Right lobe of liver (tissue), 6 donors: ENCODE measurements at regions of chr4 and their contacts with region 1.

Region 1: GRCh38 chr4:184983672-184984356 is 34.5 kb upstream of the HELT start:
- DNase-seq: peak; percentile 81 to 83 (median 82)
- ATAC-seq: peak; percentile 97 to 98 (median 98)
- H3K4me3 ChIP-seq: no peak overlapping the region
- H3K27ac ChIP-seq: no peak overlapping the region
- H3K4me1 ChIP-seq: peaks cover 0 to 5% (median 0%) of the 10 kb centered on the region in 4 donors
- H3K27me3 ChIP-seq: no peaks in the 10 kb centered on the region
- CTCF ChIP-seq: peak; percentile 46 to 63 (median 56)
- POLR2A ChIP-seq: no peak

Region 2: GRCh38 chr4:184755278-184755677 is 228.5 kb before region 1 on chr4:
- intact Hi-C with region 1: loop called in 1 of 2 experiments (anchors 10 kb)
- DNase-seq: no peak
- ATAC-seq: no peak
- H3K4me3 ChIP-seq: no peak overlapping the region
- H3K27ac ChIP-seq: no peak overlapping the region
- H3K4me1 ChIP-seq: peaks cover 0 to 17% (median 0%) of the 10 kb centered on the region in 4 donors
- H3K27me3 ChIP-seq: no peaks in the 10 kb centered on the region
- CTCF ChIP-seq: no peak
- POLR2A ChIP-seq: no peak

Region 3: GRCh38 chr4:184932343-184932742 is 51.5 kb before region 1 on chr4:
- intact Hi-C with region 1: no loop called
- DNase-seq: no peak
- ATAC-seq: no peak
- H3K4me3 ChIP-seq: no peak overlapping the region
- H3K27ac ChIP-seq: no peak overlapping the region
- H3K4me1 ChIP-seq: peaks cover 0 to 9% (median 3%) of the 10 kb centered on the region in 4 donors
- H3K27me3 ChIP-seq: no peaks in the 10 kb centered on the region
- CTCF ChIP-seq: no peak
- POLR2A ChIP-seq: no peak